ENCODE measurements at regions of chr7 and their contacts with region 1.

Region 1: GRCh38 chr7:129952653-129953560 is at the start of gene UBE2H:
- DNase-seq: peak; percentile 78 to 91 (median 86)
- ATAC-seq: peak; percentile 90
- H3K4me3 ChIP-seq: peak within 1 kb of the TSS; percentile 80
- H3K4me3 Mint-ChIP-seq: peak within 1 kb of the TSS in 8 of 10 donors; percentile 2 to 100 (median 98)
- H3K27ac ChIP-seq: peak within 1 kb of the TSS; percentile 99
- H3K27ac Mint-ChIP-seq: peak within 1 kb of the TSS in 6 of 9 donors; percentile 98 to 100 (median 99)
- H3K4me1 ChIP-seq: peaks cover 14 to 28% of the 10 kb centered on the region in 2 donors
- H3K4me1 Mint-ChIP-seq: peaks cover 0 to 13% (median 6%) of the 10 kb centered on the region in 7 donors
- H3K27me3 ChIP-seq: no peaks in the 10 kb centered on the region
- H3K27me3 Mint-ChIP-seq: peaks cover 0 to 9% (median 0%) of the 10 kb centered on the region in 5 donors
- total RNA-seq, gene UBE2H: 32.0 to 69.2 (median 49.1) TPM

Region 2: DNA sequence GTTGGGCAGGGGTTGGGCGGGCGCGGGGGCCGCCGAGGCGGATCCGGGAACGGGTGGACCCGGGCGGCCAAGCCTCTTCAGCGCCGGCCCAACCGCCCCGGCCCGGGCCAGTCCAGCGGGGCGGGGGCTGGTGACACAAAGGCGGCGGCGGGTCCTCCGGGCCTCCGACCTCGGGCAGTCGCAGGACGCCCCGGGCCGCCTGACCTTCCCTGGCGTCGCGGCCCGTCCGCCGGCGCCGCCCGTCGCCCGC is 1422.1 kb before region 1 on chr7:
- CTCF ChIA-PET with region 1: no interaction called
- POLR2A ChIA-PET with region 1: no interaction called
- intact Hi-C with region 1: loop called in 1 of 2 experiments (anchors 5 kb)
- DNase-seq: no peak
- ATAC-seq: no peak
- H3K4me3 ChIP-seq: peak overlapping the region; percentile 46
- H3K4me3 Mint-ChIP-seq: peak overlapping the region in 1 of 10 donors; percentile 16
- H3K27ac ChIP-seq: peak overlapping the region; percentile 95
- H3K27ac Mint-ChIP-seq: no peak overlapping the region
- H3K4me1 ChIP-seq: peaks cover 0 to 4% of the 10 kb centered on the region in 2 donors
- H3K4me1 Mint-ChIP-seq: peaks cover 23 to 42% (median 40%) of the 10 kb centered on the region in 7 donors
- H3K27me3 ChIP-seq: no peaks in the 10 kb centered on the region
- H3K27me3 Mint-ChIP-seq: no peaks in the 10 kb centered on the region

Region 3: GRCh38 chr7:129224251-129225205 is 728.4 kb before region 1 on chr7 and contains the start of gene AHCYL2:
- CTCF ChIA-PET with region 1: no interaction called
- POLR2A ChIA-PET with region 1: no interaction called
- intact Hi-C with region 1: loop called in 1 of 2 experiments (anchors 1 kb)
- DNase-seq: peak; percentile 88 to 98 (median 95)
- ATAC-seq: peak; percentile 96
- H3K4me3 ChIP-seq: peak within 1 kb of the TSS; percentile 96
- H3K4me3 Mint-ChIP-seq: peak within 1 kb of the TSS; percentile 88 to 99 (median 96)
- H3K27ac ChIP-seq: peak within 1 kb of the TSS; percentile 85
- H3K27ac Mint-ChIP-seq: peak within 1 kb of the TSS; percentile 87 to 98 (median 95)
- H3K4me1 ChIP-seq: peaks cover 13 to 16% of the 10 kb centered on the region in 2 donors
- H3K4me1 Mint-ChIP-seq: peaks cover 27 to 63% (median 48%) of the 10 kb centered on the region in 7 donors
- H3K27me3 ChIP-seq: no peaks in the 10 kb centered on the region
- H3K27me3 Mint-ChIP-seq: no peaks in the 10 kb centered on the region
- total RNA-seq, gene AHCYL2: 14.4 to 22.2 (median 20.4) TPM

Region 4: DNA sequence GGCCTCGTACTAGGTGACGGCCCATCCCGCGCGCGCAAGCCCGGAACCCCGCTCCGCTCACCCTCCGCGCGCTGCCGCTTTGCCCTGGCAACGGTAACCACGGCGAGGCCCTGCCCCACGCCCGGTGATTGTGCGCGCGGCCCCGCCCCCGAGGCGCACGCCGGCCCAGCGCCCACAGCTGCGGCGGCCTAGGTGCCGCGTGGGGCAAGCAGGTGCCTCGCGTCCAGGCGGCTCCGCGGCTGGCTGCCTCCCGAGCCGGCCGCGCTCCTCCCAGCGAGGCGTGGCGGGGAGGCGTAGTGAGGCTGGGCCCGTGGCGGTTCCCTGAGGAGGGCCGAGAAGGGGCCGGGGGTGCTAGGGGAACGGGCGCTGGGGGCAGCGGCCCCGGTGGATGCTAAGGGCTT is 450.5 kb before region 1 on chr7 and contains the start of gene SMKR1:
- CTCF ChIA-PET with region 1: no interaction called
- POLR2A ChIA-PET with region 1: no interaction called
- intact Hi-C with region 1: loop called in 1 of 2 experiments (anchors 1 kb)
- DNase-seq: peak; percentile 86 to 94 (median 91)
- ATAC-seq: peak; percentile 98
- H3K4me3 ChIP-seq: peak within 1 kb of the TSS; percentile 64
- H3K4me3 Mint-ChIP-seq: peak within 1 kb of the TSS; percentile 75 to 91 (median 86)
- H3K27ac ChIP-seq: peak within 1 kb of the TSS; percentile 70
- H3K27ac Mint-ChIP-seq: peak within 1 kb of the TSS; percentile 70 to 93 (median 83)
- H3K4me1 ChIP-seq: peaks cover 4 to 7% of the 10 kb centered on the region in 2 donors
- H3K4me1 Mint-ChIP-seq: peaks cover 14 to 22% (median 16%) of the 10 kb centered on the region in 7 donors
- H3K27me3 ChIP-seq: no peaks in the 10 kb centered on the region
- H3K27me3 Mint-ChIP-seq: peaks cover 0 to 23% (median 0%) of the 10 kb centered on the region in 5 donors
- total RNA-seq, gene SMKR1: 1.1 to 2.5 (median 1.4) TPM

Region 5: GRCh38 chr7:129906700-129907099 is 46.2 kb before region 1 on chr7:
- CTCF ChIA-PET with region 1: no interaction called
- POLR2A ChIA-PET with region 1: interaction called, 9 read pairs
- intact Hi-C with region 1: loop called in 1 of 2 experiments (anchors 1 kb)
- DNase-seq: peak in 6 of 9 donors; percentile 18 to 59 (median 42)
- ATAC-seq: peak; percentile 62
- H3K4me3 ChIP-seq: peak overlapping the region; percentile 3
- H3K4me3 Mint-ChIP-seq: peak overlapping the region; percentile 3 to 79 (median 69)
- H3K27ac ChIP-seq: peak overlapping the region; percentile 60
- H3K27ac Mint-ChIP-seq: peak overlapping the region; percentile 14 to 96 (median 91)
- H3K4me1 ChIP-seq: peaks cover 27 to 74% of the 10 kb centered on the region in 2 donors
- H3K4me1 Mint-ChIP-seq: peaks cover 26 to 100% (median 93%) of the 10 kb centered on the region in 7 donors
- H3K27me3 ChIP-seq: no peaks in the 10 kb centered on the region
- H3K27me3 Mint-ChIP-seq: no peaks in the 10 kb centered on the region

Region 6: GRCh38 chr7:129975309-129975708 is 22.4 kb after region 1 on chr7:
- CTCF ChIA-PET with region 1: no interaction called
- POLR2A ChIA-PET with region 1: no interaction called
- intact Hi-C with region 1: no loop called
- DNase-seq: no peak
- ATAC-seq: no peak
- H3K4me3 ChIP-seq: no peak overlapping the region
- H3K4me3 Mint-ChIP-seq: no peak overlapping the region
- H3K27ac ChIP-seq: no peak overlapping the region
- H3K27ac Mint-ChIP-seq: no peak overlapping the region
- H3K4me1 ChIP-seq: no peaks in the 10 kb centered on the region
- H3K4me1 Mint-ChIP-seq: no peaks in the 10 kb centered on the region
- H3K27me3 ChIP-seq: no peaks in the 10 kb centered on the region
- H3K27me3 Mint-ChIP-seq: no peaks in the 10 kb centered on the region

Region 7: GRCh38 chr7:130069978-130070860 is 117.3 kb after region 1 on chr7 and contains the start of gene KLHDC10:
- CTCF ChIA-PET with region 1: no interaction called
- POLR2A ChIA-PET with region 1: no interaction called
- intact Hi-C with region 1: loop called (anchors 1 kb)
- DNase-seq: peak; percentile 84 to 98 (median 96)
- ATAC-seq: peak; percentile 99
- H3K4me3 ChIP-seq: peak within 1 kb of the TSS; percentile 54
- H3K4me3 Mint-ChIP-seq: peak within 1 kb of the TSS; percentile 80 to 95 (median 92)
- H3K27ac ChIP-seq: peak within 1 kb of the TSS; percentile 82
- H3K27ac Mint-ChIP-seq: peak within 1 kb of the TSS; percentile 81 to 97 (median 90)
- H3K4me1 ChIP-seq: peaks cover 12 to 18% of the 10 kb centered on the region in 2 donors
- H3K4me1 Mint-ChIP-seq: peaks cover 34 to 51% (median 42%) of the 10 kb centered on the region in 7 donors
- H3K27me3 ChIP-seq: no peaks in the 10 kb centered on the region
- H3K27me3 Mint-ChIP-seq: peaks cover 0 to 2% (median 0%) of the 10 kb centered on the region in 5 donors
- total RNA-seq, gene KLHDC10: 14.5 to 20.4 (median 17.3) TPM

Region 8: DNA sequence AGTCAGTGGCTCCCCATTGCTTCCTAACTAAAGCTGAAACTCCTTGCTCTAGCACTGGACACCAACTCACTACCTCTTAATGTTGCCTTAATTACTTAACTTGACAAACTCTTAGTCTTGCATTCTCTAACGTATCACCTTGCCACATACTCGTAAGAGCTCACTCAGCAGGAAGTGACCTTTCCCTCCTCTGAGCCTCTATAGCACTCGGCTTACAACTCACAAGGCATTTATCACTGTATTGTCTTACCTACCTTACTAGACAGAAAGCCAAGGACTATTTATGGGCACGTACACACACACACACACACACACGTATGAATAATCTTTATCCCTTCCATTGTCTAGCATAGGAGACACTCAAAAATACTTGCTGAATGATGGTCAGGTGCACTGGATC is 466.8 kb after region 1 on chr7:
- CTCF ChIA-PET with region 1: no interaction called
- POLR2A ChIA-PET with region 1: no interaction called
- intact Hi-C with region 1: no loop called
- DNase-seq: peak in 5 of 9 donors; percentile 19 to 46 (median 27)
- ATAC-seq: peak; percentile 67
- H3K4me3 ChIP-seq: no peak overlapping the region
- H3K4me3 Mint-ChIP-seq: peak overlapping the region; percentile 12 to 84 (median 66)
- H3K27ac ChIP-seq: peak overlapping the region; percentile 43
- H3K27ac Mint-ChIP-seq: peak overlapping the region; percentile 50 to 96 (median 92)
- H3K4me1 ChIP-seq: peaks cover 7 to 71% of the 10 kb centered on the region in 2 donors
- H3K4me1 Mint-ChIP-seq: peaks cover 36 to 88% (median 84%) of the 10 kb centered on the region in 7 donors
- H3K27me3 ChIP-seq: no peaks in the 10 kb centered on the region
- H3K27me3 Mint-ChIP-seq: no peaks in the 10 kb centered on the region

Region 9: GRCh38 chr7:130961128-130961601 is 1008.3 kb after region 1 on chr7:
- CTCF ChIA-PET with region 1: no interaction called
- POLR2A ChIA-PET with region 1: no interaction called
- intact Hi-C with region 1: loop called in 1 of 2 experiments (anchors 5 kb)
- DNase-seq: peak; percentile 37 to 88 (median 79)
- ATAC-seq: peak; percentile 87
- H3K4me3 ChIP-seq: peak overlapping the region; percentile 65
- H3K4me3 Mint-ChIP-seq: peak overlapping the region; percentile 87 to 98 (median 90)
- H3K27ac ChIP-seq: peak overlapping the region; percentile 80
- H3K27ac Mint-ChIP-seq: peak overlapping the region in 8 of 9 donors; percentile 94 to 100 (median 97)
- H3K4me1 ChIP-seq: peaks cover 50 to 60% of the 10 kb centered on the region in 2 donors
- H3K4me1 Mint-ChIP-seq: peaks cover 53 to 76% (median 69%) of the 10 kb centered on the region in 7 donors
- H3K27me3 ChIP-seq: no peaks in the 10 kb centered on the region
- H3K27me3 Mint-ChIP-seq: no peaks in the 10 kb centered on the region